K562 (cell line): ENCODE measurements at regions of chr5 and their contacts with region 1.

Region 1: GRCh38 chr5:32174011-32174870 is at the start of gene GOLPH3:
- DNase-seq: peak; percentile 93 to 96 (median 94)
- ATAC-seq: peak; percentile 90
- H3K4me3 ChIP-seq: peak within 1 kb of the TSS; percentile 81
- H3K27ac ChIP-seq: peak within 1 kb of the TSS; percentile 98
- H3K4me1 ChIP-seq: peaks cover 4 to 13% of the 10 kb centered on the region in 2 experiments
- H3K27me3 ChIP-seq: no peaks in the 10 kb centered on the region
- CTCF ChIP-seq: peak in 2 of 3 experiments; percentile 21; a peak in 2 of 6 replicates
- EP300 ChIP-seq: peak; percentile 50
- POLR2A ChIP-seq: peak; percentile 98
- RAD21 ChIP-seq: peak in 1 of 2 experiments; percentile 14; a peak in 2 of 4 replicates
- polyA plus RNA-seq, gene GOLPH3: 18.8 to 21.5 TPM

Region 2: DNA sequence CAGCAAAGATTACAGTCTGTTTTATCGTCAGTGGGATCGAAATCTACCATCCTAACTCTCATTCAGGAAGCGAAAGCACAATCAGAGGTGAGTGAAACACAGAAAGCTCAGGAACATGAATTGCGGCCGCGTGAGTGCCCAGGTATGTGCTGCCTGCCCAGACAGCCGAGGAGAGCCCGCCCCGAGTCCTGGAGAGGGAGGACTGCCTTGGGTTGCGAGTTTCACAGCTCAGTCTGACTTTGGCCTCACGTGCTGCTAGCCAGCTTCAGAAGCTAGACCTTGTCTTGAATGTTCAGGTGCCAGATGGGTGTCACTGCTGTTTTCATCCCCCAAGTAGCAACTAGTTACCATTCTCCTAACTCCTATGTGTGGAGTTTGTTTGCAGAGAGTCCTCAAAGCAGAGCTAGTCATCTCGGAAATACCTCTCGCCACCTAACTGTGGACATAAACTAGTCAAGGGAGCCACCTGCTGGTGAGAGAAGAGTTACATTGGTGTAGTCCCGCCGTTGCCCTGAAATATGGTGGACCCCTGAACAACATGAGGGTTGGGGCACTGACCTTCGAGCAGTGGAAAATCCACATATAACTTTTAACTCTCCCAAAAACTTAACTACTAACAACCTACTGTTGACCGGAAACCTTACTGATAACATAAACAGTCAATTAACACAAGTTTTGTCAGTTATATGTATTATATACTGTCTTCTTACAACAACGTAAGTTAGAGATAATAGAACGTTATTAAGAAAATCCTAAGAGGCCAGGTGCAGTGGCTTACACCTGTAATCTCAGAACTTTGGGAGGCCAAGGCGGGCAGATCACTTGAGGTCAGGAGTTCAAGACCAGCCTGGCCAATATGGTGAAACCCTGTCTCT is 81.1 kb before region 1 on chr5:
- CTCF ChIA-PET with region 1: no interaction called
- POLR2A ChIA-PET with region 1: no interaction called
- in situ Hi-C with region 1: no loop called
- intact Hi-C with region 1: no loop called
- DNase-seq: peak; percentile 80 to 89 (median 82)
- ATAC-seq: peak; percentile 95
- H3K4me3 ChIP-seq: no peak overlapping the region
- H3K27ac ChIP-seq: no peak overlapping the region
- H3K4me1 ChIP-seq: peaks cover 0 to 12% of the 10 kb centered on the region in 2 experiments; a peak in 2 of 5 replicates
- H3K27me3 ChIP-seq: peaks cover 12 to 26% of the 10 kb centered on the region in 2 experiments; a peak in 4 of 5 replicates
- CTCF ChIP-seq: peak; percentile 87 to 92 (median 90)
- EP300 ChIP-seq: no peak
- POLR2A ChIP-seq: no peak
- RAD21 ChIP-seq: peak; percentile 44 to 85

Region 3: DNA sequence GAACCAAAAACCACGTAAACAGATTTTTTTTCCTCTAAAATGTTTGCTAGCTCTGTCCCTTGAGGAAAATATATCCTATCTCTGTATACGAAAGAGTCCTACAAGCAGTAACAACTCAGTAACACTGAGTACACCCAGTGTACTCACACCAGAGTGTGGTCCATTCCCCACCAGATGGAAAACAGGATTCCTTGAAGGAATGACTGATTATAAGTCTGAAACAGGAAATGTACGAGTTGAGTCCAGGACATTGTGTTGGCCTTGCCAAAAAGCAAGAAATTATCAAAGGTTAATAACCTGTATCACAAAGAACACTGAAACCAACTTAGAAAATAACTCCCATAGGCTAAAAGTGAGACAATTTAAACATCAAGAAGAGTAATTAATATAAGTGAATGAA is 20.5 kb before region 1 on chr5:
- CTCF ChIA-PET with region 1: no interaction called
- POLR2A ChIA-PET with region 1: interaction called, 51 read pairs
- in situ Hi-C with region 1: no loop called
- intact Hi-C with region 1: no loop called
- DNase-seq: no peak
- ATAC-seq: no peak
- H3K4me3 ChIP-seq: no peak overlapping the region
- H3K27ac ChIP-seq: no peak overlapping the region
- H3K4me1 ChIP-seq: peaks cover 0 to 7% of the 10 kb centered on the region in 2 experiments; a peak in 3 of 5 replicates
- H3K27me3 ChIP-seq: no peaks in the 10 kb centered on the region
- CTCF ChIP-seq: no peak
- EP300 ChIP-seq: no peak
- POLR2A ChIP-seq: no peak
- RAD21 ChIP-seq: no peak

Region 4: GRCh38 chr5:32163785-32164184 is 10.5 kb before region 1 on chr5:
- CTCF ChIA-PET with region 1: no interaction called
- POLR2A ChIA-PET with region 1: interaction called, 51 read pairs
- in situ Hi-C with region 1: no loop called
- intact Hi-C with region 1: no loop called
- DNase-seq: no peak
- ATAC-seq: no peak
- H3K4me3 ChIP-seq: no peak overlapping the region
- H3K27ac ChIP-seq: no peak overlapping the region
- H3K4me1 ChIP-seq: no peaks in the 10 kb centered on the region; a peak in 1 of 5 replicates
- H3K27me3 ChIP-seq: no peaks in the 10 kb centered on the region
- CTCF ChIP-seq: no peak
- EP300 ChIP-seq: no peak
- POLR2A ChIP-seq: no peak
- RAD21 ChIP-seq: no peak

Region 5: DNA sequence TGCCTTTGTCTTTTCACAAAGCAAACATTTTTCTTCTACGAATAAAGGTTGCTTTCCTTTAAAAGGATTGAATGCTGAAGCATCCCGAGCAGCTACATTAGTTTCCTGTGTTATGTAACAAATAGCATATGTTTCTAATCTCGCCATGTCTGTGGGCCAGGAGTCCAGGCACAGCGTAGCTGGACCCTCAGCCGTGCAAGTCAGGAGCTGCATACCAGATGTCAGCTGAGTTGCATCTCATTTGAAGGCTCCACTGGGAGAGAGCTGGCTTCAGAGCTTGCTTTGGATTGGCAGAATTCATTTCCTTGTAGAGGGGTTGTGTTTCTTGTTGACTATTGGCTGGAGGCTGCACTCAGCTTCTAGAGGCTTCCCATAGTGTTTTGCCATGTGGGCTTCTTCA is 15.9 kb after region 1 on chr5:
- CTCF ChIA-PET with region 1: no interaction called
- POLR2A ChIA-PET with region 1: interaction called, 10 read pairs
- in situ Hi-C with region 1: no loop called
- intact Hi-C with region 1: no loop called
- DNase-seq: no peak
- ATAC-seq: peak; percentile 22; the same call in 1 of the 3 replicates
- H3K4me3 ChIP-seq: no peak overlapping the region
- H3K27ac ChIP-seq: no peak overlapping the region
- H3K4me1 ChIP-seq: peaks cover 5 to 8% of the 10 kb centered on the region in 2 experiments; a peak in 2 of 5 replicates
- H3K27me3 ChIP-seq: no peaks in the 10 kb centered on the region
- CTCF ChIP-seq: no peak
- EP300 ChIP-seq: no peak
- POLR2A ChIP-seq: no peak
- RAD21 ChIP-seq: no peak

Region 6: GRCh38 chr5:32312647-32313523 is 138.6 kb after region 1 on chr5 and contains the start of gene MTMR12:
- CTCF ChIA-PET with region 1: no interaction called
- POLR2A ChIA-PET with region 1: no interaction called
- in situ Hi-C with region 1: no loop called
- intact Hi-C with region 1: loop called (anchors 2 kb)
- DNase-seq: peak; percentile 99 to 100 (median 100)
- ATAC-seq: peak; percentile 97
- H3K4me3 ChIP-seq: peak within 1 kb of the TSS; percentile 94
- H3K27ac ChIP-seq: peak within 1 kb of the TSS; percentile 80
- H3K4me1 ChIP-seq: peaks cover 13 to 33% of the 10 kb centered on the region in 2 experiments
- H3K27me3 ChIP-seq: no peaks in the 10 kb centered on the region
- CTCF ChIP-seq: no peak
- EP300 ChIP-seq: no peak
- POLR2A ChIP-seq: peak; percentile 93
- RAD21 ChIP-seq: no peak
- polyA plus RNA-seq, gene MTMR12: 4.0 to 5.3 TPM